IMR-90 (cell line): ENCODE measurements at regions of chr4 and their contacts with region 1.

Region 1: GRCh38 chr4:53908661-53909078 is 155.7 kb downstream of the CHIC2 start:
- DNase-seq: peak; percentile 97
- ATAC-seq: peak; percentile 70
- H3K4me3 ChIP-seq: peak overlapping the region; percentile 22; the same call in 1 of the 2 replicates
- H3K27ac ChIP-seq: peak overlapping the region; percentile 96
- H3K4me1 ChIP-seq: peaks cover 11% of the 10 kb centered on the region
- H3K27me3 ChIP-seq: no peaks in the 10 kb centered on the region
- CTCF ChIP-seq: peak; percentile 95
- POLR2A ChIP-seq: peak; percentile 48; the same call in 1 of the 2 replicates
- RAD21 ChIP-seq: peak; percentile 93

Region 2: GRCh38 chr4:53365486-53366300 is 543.0 kb before region 1 on chr4 and contains the start of gene SCFD2:
- CTCF ChIA-PET with region 1: no interaction called
- POLR2A ChIA-PET with region 1: no interaction called
- dilution Hi-C with region 1: no loop called
- in situ Hi-C with region 1: no loop called
- intact Hi-C with region 1: loop called (anchors 5 kb)
- DNase-seq: peak; percentile 97
- ATAC-seq: peak; percentile 97
- H3K4me3 ChIP-seq: peak within 1 kb of the TSS; percentile 79
- H3K27ac ChIP-seq: peak within 1 kb of the TSS; percentile 57
- H3K4me1 ChIP-seq: 0 out of 2 replicates have a peak, but pooled peaks cover 3% of the 10 kb centered on the region
- H3K27me3 ChIP-seq: no peaks in the 10 kb centered on the region
- CTCF ChIP-seq: no peak
- POLR2A ChIP-seq: peak; percentile 36; the same call in 1 of the 2 replicates
- RAD21 ChIP-seq: no peak
- total RNA-seq, gene SCFD2: 51.9 and 62.4 TPM in 2 replicates

Region 3: DNA sequence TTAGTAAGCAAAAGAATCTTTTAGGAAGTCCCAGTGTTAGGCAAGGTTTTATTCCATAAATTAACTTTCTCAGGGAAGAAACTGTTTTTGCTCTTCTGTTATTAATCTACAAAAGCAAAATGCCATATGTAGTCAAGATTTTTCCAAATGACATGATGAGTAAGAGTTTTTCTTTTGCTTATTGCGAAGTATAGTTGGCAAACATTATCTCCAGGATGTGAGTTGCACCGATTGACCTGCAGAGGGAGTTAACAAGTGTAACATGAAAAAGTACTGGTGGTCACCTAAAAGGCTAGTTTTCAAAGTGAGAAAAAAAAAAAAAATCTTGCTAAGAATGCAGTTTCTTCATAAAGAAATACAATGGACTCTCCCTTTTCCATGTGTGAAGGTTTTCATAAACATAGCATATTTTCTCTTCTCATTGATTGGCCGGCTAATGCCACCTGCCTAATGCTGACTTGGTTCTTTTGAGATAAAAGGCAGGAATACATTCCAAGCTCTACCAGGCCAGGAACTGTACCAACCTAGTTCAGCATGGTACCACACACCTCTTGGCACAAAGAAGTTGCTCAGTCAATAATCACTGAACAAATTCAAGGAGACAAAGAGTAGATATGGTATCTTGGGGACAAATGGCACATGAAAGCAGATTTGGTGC is 417.6 kb before region 1 on chr4:
- CTCF ChIA-PET with region 1: no interaction called
- POLR2A ChIA-PET with region 1: no interaction called
- dilution Hi-C with region 1: no loop called
- in situ Hi-C with region 1: no loop called
- intact Hi-C with region 1: loop called (anchors 2 kb)
- DNase-seq: peak; percentile 93
- ATAC-seq: peak; percentile 80
- H3K4me3 ChIP-seq: no peak overlapping the region
- H3K27ac ChIP-seq: peak overlapping the region; percentile 93; the same call in 1 of the 2 replicates
- H3K4me1 ChIP-seq: peaks cover 11% of the 10 kb centered on the region
- H3K27me3 ChIP-seq: no peaks in the 10 kb centered on the region
- CTCF ChIP-seq: peak; percentile 71
- POLR2A ChIP-seq: no peak
- RAD21 ChIP-seq: peak; percentile 70

Region 4: GRCh38 chr4:53702334-53703266 is 206.1 kb before region 1 on chr4:
- CTCF ChIA-PET with region 1: interaction called, 9 read pairs
- POLR2A ChIA-PET with region 1: interaction called, 3 read pairs
- dilution Hi-C with region 1: no loop called
- in situ Hi-C with region 1: loop called (anchors 5 kb)
- intact Hi-C with region 1: loop called (anchors 1 kb)
- DNase-seq: peak; percentile 77
- ATAC-seq: peak; percentile 83
- H3K4me3 ChIP-seq: no peak overlapping the region
- H3K27ac ChIP-seq: peak overlapping the region; percentile 86
- H3K4me1 ChIP-seq: peaks cover 22% of the 10 kb centered on the region
- H3K27me3 ChIP-seq: no peaks in the 10 kb centered on the region
- CTCF ChIP-seq: 0 out of 2 replicates have a peak, but pooled peaks have one; percentile 10
- POLR2A ChIP-seq: no peak
- RAD21 ChIP-seq: peak; percentile 4; the same call in 1 of the 2 replicates

Region 5: GRCh38 chr4:53855581-53856250 is 53.0 kb before region 1 on chr4:
- CTCF ChIA-PET with region 1: no interaction called
- POLR2A ChIA-PET with region 1: no interaction called
- dilution Hi-C with region 1: no loop called
- in situ Hi-C with region 1: no loop called
- intact Hi-C with region 1: no loop called
- DNase-seq: peak; percentile 91
- ATAC-seq: peak; percentile 68
- H3K4me3 ChIP-seq: no peak overlapping the region
- H3K27ac ChIP-seq: peak overlapping the region; percentile 72; the same call in 1 of the 2 replicates
- H3K4me1 ChIP-seq: peaks cover 24% of the 10 kb centered on the region
- H3K27me3 ChIP-seq: no peaks in the 10 kb centered on the region
- CTCF ChIP-seq: no peak
- POLR2A ChIP-seq: no peak
- RAD21 ChIP-seq: 0 out of 2 replicates have a peak, but pooled peaks have one; percentile 14

Region 6: DNA sequence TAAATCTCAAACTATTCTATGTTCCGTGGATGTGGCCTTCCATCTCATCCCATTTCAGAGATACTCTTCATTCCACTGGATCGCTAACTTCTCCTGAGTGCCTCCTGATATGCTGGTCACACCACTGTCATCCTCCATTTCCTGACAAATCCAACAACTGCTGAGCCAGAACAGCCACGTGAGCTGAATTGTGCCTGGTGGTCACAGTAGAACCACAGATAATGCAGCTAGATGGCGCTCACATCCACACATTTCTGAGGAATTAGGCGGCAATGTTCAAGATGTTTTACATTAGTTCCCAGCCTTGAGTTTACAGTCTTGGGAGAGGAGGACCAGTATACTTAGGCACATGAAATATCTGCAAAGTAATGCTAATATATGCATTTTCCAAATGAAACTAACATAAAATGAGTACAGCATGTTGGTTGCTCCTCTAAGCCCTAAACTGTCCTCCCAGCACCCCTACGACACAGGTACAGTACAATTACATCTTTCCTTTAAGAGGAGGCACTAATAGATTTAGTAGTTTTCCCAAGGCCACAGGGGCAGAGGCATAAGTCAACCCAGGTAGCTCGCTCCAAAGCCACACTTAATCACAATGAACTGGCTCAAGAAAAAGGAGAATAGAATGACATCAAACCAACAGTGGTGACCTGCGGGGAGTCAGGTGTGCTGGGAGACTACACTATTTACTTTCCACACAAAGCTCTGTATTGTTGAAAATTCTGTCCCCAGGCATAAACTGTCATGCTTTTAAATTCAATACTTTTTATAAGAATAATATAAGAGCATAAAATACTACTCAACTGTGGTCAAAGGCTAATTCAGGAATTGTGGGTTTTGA is 21.5 kb after region 1 on chr4:
- CTCF ChIA-PET with region 1: interaction called, 15 read pairs
- POLR2A ChIA-PET with region 1: interaction called, 3 read pairs
- dilution Hi-C with region 1: no loop called
- in situ Hi-C with region 1: no loop called
- intact Hi-C with region 1: no loop called
- DNase-seq: peak; percentile 93
- ATAC-seq: peak; percentile 75
- H3K4me3 ChIP-seq: no peak overlapping the region
- H3K27ac ChIP-seq: peak overlapping the region; percentile 20; the same call in 1 of the 2 replicates
- H3K4me1 ChIP-seq: peaks cover 14% of the 10 kb centered on the region
- H3K27me3 ChIP-seq: no peaks in the 10 kb centered on the region
- CTCF ChIP-seq: peak; percentile 85
- POLR2A ChIP-seq: no peak
- RAD21 ChIP-seq: peak; percentile 84

Region 7: DNA sequence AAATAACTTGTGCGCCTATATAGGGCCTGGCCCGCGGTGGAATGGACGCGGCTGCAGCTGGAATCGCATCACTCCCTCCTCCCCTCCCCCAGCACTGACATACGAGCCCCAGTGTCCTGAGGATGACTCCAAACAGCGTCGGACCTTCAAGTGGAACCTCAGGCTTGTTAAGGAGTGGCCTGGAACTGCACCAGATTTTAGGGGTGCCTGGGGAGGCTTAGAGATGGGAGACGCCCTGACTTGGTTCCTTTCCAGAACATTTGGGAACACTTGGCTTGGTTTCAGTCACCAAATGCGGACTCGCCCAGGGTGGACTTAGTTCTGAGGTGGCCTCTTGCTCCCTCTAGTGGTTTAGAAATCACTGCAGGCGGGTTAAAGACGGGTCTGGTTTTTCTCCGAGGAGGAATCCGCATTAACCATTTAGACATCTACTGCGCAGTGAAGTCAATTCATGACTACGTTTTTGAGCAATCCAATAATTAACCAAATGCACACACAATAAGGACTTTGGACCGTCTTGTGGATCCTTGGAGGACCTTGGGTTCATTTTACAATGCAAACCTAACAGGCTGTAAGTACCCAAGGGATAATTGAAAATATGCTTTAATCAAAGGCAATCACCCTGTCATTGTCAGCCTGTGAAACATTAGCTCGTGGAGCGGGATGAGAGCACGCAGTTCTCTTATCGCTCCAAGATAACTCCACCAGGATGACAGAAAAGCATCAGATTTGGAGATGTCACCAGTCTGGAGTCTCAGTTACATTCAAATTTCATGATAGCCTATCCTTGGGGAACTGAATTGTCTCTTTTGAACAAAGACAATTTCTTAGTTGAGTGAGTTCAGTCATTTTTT is 309.2 kb after region 1 on chr4:
- CTCF ChIA-PET with region 1: interaction called, 9 read pairs
- POLR2A ChIA-PET with region 1: no interaction called
- dilution Hi-C with region 1: no loop called
- in situ Hi-C with region 1: no loop called
- intact Hi-C with region 1: loop called (anchors 1 kb)
- DNase-seq: peak; percentile 83
- ATAC-seq: peak; percentile 94
- H3K4me3 ChIP-seq: peak overlapping the region; percentile 48
- H3K27ac ChIP-seq: peak overlapping the region; percentile 81
- H3K4me1 ChIP-seq: peaks cover 3% of the 10 kb centered on the region
- H3K27me3 ChIP-seq: no peaks in the 10 kb centered on the region
- CTCF ChIP-seq: peak; percentile 91
- POLR2A ChIP-seq: 0 out of 2 replicates have a peak, but pooled peaks have one; percentile 27
- RAD21 ChIP-seq: peak; percentile 92